Cardiac septum (tissue), 1 donor: ENCODE measurements at regions of chr10 and their contacts with region 1.

Region 1: DNA sequence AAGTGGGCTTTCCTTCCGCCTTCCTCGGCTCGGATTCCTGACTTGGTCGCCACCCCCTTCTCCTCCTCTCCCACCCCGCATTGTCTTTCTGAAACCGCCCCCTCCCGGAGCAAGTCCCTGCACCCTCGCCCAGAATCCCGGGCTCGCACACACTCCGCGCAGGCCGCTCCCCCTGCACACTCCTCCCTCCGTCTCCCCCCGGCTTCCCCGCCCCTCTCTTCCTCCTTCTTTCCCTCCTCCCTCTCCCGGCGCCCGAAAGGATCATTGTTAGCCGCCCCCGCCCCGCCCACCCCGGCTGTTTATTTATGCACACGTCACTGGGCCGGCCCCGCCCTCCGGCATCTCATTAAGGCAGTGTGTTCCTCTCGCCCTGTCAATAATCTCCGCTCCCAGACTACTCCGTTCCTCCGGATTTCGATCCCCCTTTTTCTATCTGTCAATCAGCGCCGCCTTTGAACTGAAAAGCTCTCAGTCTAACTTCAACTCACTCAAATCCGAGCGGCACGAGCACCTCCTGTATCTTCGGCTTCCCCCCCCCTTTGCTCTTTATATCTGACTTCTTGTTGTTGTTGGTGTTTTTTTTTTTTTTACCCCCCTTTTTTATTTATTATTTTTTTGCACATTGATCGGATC is at the start of gene TCF7L2:
- DNase-seq: peak; percentile 96
- total RNA-seq, gene TCF7L2: 11.7 TPM

Region 2: DNA sequence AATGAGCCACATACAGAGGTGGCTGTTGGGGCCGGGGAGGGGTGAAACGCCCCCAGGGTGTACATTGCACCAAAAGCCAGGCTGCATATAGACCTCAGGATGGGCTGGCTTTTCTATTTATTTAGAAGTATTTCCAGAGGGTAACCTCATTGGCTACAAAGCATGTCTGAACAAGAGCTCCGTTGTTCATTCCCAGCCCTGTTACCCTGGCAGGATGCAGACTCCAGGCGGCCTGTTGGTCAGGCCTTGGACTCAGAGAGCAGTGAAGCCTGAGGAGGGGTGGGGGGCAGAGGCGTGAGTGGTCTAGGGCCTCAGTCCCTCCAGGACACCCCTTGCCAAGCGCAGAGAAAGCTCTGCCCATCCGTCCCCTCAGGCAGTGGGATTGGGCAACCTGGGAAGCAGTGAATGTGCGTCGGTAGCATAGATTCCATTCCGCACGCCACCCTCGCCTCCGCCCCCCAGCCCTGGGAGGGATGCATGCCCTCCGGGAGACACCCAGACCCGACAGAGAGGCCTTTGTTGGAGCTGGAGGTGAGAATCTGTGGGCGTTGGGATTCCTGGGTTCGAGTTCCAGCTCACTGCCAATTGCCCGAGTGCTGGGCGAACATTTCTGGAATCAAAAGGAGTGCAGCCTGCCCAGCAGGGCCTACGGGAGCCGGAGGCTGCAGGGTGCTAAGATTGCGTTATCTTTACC is 42.0 kb after region 1 on chr10:
- intact Hi-C with region 1: no loop called
- DNase-seq: no peak

Region 3: DNA sequence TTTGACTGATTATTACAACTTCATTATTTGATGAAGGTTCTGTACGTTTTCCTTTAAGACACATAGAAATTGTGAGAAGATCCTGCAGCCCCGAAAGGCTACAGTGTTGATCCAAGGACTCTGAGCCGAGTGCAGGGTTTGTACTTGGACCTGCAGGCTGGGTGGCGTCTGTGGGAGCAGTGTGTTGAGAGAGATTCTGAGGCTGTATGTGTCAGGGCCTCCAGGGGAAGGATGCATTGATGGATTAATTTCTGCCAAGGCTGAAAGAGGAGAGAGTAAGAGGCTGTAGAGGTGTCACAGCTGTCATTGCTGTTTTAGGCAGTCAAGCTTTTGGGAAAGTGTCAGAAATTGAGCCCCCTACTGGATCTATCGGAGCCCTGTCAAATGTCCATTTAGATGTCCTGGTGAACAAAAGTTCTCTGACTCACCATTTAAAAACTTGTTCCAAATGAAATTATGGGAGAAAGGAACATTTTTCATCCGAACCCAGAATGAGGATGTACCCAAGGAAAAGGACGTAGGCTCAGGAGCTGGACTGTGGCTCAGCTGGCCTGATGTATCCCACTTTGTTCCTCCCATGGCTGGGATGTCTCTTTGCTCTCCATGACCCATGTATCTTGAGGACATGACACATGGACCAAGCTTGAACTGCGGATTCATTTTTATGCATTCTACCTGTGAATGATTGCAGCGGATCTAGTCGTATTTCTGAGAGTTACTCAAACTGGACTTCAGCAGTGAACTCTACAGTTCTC is 102.3 kb after region 1 on chr10:
- intact Hi-C with region 1: loop called (anchors 5 kb)
- DNase-seq: no peak

Region 4: GRCh38 chr10:113073549-113074189 is 123.7 kb after region 1 on chr10:
- intact Hi-C with region 1: loop called (anchors 5 kb)
- DNase-seq: peak; percentile 85

Region 5: DNA sequence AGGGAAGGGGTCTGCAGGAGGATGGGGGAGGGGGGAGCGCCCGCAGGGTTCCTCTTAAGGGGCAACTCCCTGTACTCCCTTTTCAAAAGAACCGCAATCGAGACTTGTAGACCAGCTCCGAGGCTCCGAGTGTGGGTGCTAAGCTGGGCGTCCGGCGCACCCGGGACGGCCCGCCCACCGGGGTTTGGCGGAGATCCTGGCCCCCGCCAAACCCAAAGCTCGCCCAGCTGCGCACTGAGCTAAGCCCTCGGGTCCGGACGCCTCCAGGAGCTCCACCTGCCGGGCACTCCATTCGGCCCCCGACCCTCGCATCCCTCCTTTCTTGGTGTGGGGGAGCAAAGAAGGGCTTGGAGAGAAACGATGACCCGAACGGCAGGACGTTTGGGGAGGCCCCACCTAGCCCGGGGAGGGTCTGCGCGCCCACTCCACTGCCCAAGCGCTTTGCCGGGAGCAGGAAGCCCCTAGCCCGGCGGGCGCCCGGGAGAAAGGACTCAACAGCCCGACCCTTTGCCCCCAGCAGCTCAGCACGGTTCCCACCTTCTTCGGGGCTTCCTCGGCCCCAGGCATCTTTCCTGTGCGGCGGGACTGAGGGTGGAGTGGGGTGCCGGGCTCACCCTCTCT is 1453.7 kb after region 1 on chr10:
- intact Hi-C with region 1: no loop called
- DNase-seq: no peak